ENCODE measurements at regions of chr7 and their contacts with region 1.

Region 1: DNA sequence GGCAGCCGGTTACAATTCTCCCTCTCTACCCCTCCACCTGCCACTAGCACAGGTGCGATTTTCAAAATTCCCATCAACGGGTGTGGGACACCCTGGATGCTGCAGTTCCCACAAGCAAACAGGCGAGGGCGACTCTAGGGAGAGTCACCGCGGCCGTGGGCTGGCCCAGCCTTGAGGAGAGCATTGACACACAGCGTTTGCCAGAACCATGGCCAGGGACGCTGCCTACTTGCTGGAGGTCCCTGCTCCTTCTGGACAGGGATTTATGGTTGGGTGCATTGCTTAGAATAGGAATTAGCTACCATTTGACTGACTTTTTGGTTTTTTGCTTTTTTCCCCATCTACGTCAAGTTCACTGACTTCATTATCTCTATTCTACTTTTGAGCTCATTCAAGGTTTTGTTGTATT is 19.0 kb upstream of the CLDN4 start:
- DNase-seq: peak; percentile 78 to 91
- ATAC-seq: peak; percentile 84
- H3K4me3 ChIP-seq: no peak overlapping the region
- H3K27ac ChIP-seq: no peak overlapping the region
- H3K4me1 ChIP-seq: no peaks in the 10 kb centered on the region
- H3K27me3 ChIP-seq: no peaks in the 10 kb centered on the region

Region 2: GRCh38 chr7:73851410-73852234 is 39.9 kb after region 1 on chr7:
- intact Hi-C with region 1: loop called (anchors 1 to 2 kb)
- DNase-seq: no peak
- ATAC-seq: peak; percentile 76
- H3K4me3 ChIP-seq: no peak overlapping the region
- H3K27ac ChIP-seq: peak overlapping the region in 1 of 2 donors; percentile 61
- H3K4me1 ChIP-seq: no peaks in the 10 kb centered on the region
- H3K27me3 ChIP-seq: no peaks in the 10 kb centered on the region

Region 3: GRCh38 chr7:73856941-73857340 is 45.2 kb after region 1 on chr7:
- intact Hi-C with region 1: loop called (anchors 1 to 2 kb)
- DNase-seq: no peak
- ATAC-seq: no peak
- H3K4me3 ChIP-seq: no peak overlapping the region
- H3K27ac ChIP-seq: no peak overlapping the region
- H3K4me1 ChIP-seq: no peaks in the 10 kb centered on the region
- H3K27me3 ChIP-seq: no peaks in the 10 kb centered on the region